ENCODE measurements at regions of chr1 and their contacts with region 1.

Region 1: GRCh38 chr1:206982216-206982615 is 12.0 kb upstream of the FCAMR start:
- DNase-seq: peak; percentile 33
- H3K4me3 ChIP-seq: no peak overlapping the region
- H3K27ac ChIP-seq: no peak overlapping the region
- H3K4me1 ChIP-seq: no peaks in the 10 kb centered on the region
- H3K27me3 ChIP-seq: no peaks in the 10 kb centered on the region
- CTCF ChIP-seq: peak; percentile 82 to 83

Region 2: GRCh38 chr1:206479183-206480125 is 502.8 kb before region 1 on chr1:
- CTCF ChIA-PET with region 1: no interaction called
- dilution Hi-C with region 1: no loop called
- in situ Hi-C with region 1: no loop called
- intact Hi-C with region 1: loop called (anchors 5 kb)
- DNase-seq: peak; percentile 49
- H3K4me3 ChIP-seq: no peak overlapping the region
- H3K27ac ChIP-seq: no peak overlapping the region
- H3K4me1 ChIP-seq: peaks cover 21% of the 10 kb centered on the region
- H3K27me3 ChIP-seq: no peaks in the 10 kb centered on the region
- CTCF ChIP-seq: peak; percentile 75 to 84

Region 3: GRCh38 chr1:206612129-206612876 is 369.9 kb before region 1 on chr1 and contains the start of gene EIF2D:
- CTCF ChIA-PET with region 1: interaction called, 5 read pairs
- dilution Hi-C with region 1: no loop called
- in situ Hi-C with region 1: no loop called
- intact Hi-C with region 1: loop called (anchors 1 kb)
- DNase-seq: peak; percentile 87
- H3K4me3 ChIP-seq: peak within 1 kb of the TSS; percentile 74 to 93 (median 87)
- H3K27ac ChIP-seq: peak within 1 kb of the TSS; percentile 86
- H3K4me1 ChIP-seq: peaks cover 9% of the 10 kb centered on the region
- H3K27me3 ChIP-seq: no peaks in the 10 kb centered on the region
- CTCF ChIP-seq: peak; percentile 74 to 98
- total RNA-seq, gene EIF2D: 43.0 to 44.0 TPM

Region 4: DNA sequence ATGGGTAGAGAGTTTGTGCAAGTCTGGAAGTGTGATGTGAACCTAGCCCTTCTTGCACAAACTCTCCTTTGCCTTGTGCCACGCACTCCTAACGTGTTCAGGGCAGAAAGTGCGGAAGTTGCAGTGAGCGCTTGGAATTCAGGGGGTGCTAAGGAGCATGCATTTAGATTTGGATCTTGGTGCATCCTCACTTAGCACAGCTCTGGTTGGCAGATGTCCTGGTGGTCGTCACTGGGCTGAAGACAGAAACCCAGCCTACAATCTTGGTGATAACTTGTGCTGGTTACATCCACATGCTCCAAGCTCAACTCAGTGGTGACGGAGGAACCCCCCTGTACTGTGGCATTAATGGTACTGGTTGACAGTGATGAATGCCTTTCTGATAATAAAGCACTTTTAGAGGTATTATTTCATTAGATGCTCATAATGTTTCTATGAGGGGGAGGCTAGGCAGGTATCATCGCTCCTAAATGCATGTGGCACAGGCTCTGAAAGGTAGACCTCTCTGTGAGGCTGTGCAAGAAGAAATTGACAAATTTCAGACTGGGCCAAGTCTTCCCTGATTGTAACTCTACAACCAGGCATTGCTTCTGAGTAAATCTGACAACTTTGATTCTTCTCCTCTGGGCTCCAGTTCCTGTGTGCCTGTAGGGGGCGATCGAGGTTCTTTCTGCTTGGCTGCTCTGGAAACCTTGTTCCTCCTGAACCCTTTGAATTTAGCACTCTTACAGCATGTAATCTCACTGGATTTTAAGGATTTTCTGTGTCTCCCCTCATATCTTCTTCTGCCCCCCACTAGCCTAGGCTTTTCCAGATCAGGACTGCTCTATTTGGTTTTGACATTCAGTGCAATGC is 256.9 kb before region 1 on chr1:
- CTCF ChIA-PET with region 1: no interaction called
- dilution Hi-C with region 1: no loop called
- in situ Hi-C with region 1: no loop called
- intact Hi-C with region 1: loop called (anchors 2 kb)
- DNase-seq: no peak
- H3K4me3 ChIP-seq: no peak overlapping the region
- H3K27ac ChIP-seq: no peak overlapping the region
- H3K4me1 ChIP-seq: peaks cover 19% of the 10 kb centered on the region
- H3K27me3 ChIP-seq: no peaks in the 10 kb centered on the region
- CTCF ChIP-seq: peak; percentile 62 to 68

Region 5: GRCh38 chr1:206808615-206809014 is 173.6 kb before region 1 on chr1:
- CTCF ChIA-PET with region 1: interaction called, 16 read pairs
- dilution Hi-C with region 1: no loop called
- in situ Hi-C with region 1: loop called in 1 of 2 experiments (anchors 10 kb)
- intact Hi-C with region 1: loop called (anchors 1 kb)
- DNase-seq: no peak
- H3K4me3 ChIP-seq: no peak overlapping the region
- H3K27ac ChIP-seq: no peak overlapping the region
- H3K4me1 ChIP-seq: peaks cover 7% of the 10 kb centered on the region
- H3K27me3 ChIP-seq: no peaks in the 10 kb centered on the region
- CTCF ChIP-seq: peak; percentile 15 to 52

Region 6: DNA sequence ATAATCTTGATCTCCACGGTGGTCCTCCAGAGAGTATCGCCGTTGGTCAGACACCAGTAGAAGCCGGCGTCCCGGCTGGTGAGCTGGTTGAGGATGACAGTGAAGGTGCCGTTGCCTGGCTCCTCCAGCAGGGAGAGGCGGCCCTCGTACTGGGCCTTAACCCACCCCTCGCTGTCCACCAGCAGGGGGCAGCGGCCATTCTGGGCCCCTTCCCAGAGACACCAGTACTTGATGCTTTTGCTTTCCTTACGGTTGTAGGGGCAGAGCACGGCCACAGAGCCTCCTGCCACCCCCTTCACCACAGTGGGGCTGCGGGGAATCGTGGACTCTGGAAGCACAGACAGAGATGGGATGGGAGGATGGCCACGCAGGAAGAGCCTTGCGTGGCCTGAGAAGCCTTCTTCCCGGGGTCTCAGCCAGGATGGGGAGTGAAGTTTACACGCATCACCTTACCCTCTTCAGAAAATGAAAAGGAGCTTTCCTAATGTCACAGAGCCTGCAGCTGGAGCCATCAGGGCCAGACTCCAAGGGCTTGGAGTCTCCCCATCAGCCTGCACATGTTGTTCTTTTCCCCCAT is 46.6 kb before region 1 on chr1:
- CTCF ChIA-PET with region 1: interaction called, 4 read pairs
- dilution Hi-C with region 1: no loop called
- in situ Hi-C with region 1: no loop called
- intact Hi-C with region 1: loop called (anchors 5 kb)
- DNase-seq: no peak
- H3K4me3 ChIP-seq: no peak overlapping the region
- H3K27ac ChIP-seq: no peak overlapping the region
- H3K4me1 ChIP-seq: peaks cover 22% of the 10 kb centered on the region
- H3K27me3 ChIP-seq: no peaks in the 10 kb centered on the region
- CTCF ChIP-seq: peak; percentile 21 to 26

Region 7: GRCh38 chr1:207052911-207053769 is 70.9 kb after region 1 on chr1 and contains the start of gene PFKFB2:
- CTCF ChIA-PET with region 1: no interaction called
- dilution Hi-C with region 1: no loop called
- in situ Hi-C with region 1: no loop called
- intact Hi-C with region 1: no loop called
- DNase-seq: peak; percentile 99
- H3K4me3 ChIP-seq: peak within 1 kb of the TSS; percentile 77 to 91 (median 80)
- H3K27ac ChIP-seq: peak within 1 kb of the TSS; percentile 95
- H3K4me1 ChIP-seq: peaks cover 34% of the 10 kb centered on the region
- H3K27me3 ChIP-seq: no peaks in the 10 kb centered on the region
- CTCF ChIP-seq: peak in 1 of 2 donors; percentile 29
- total RNA-seq, gene PFKFB2: 34.4 to 38.7 TPM

Region 8: GRCh38 chr1:207077470-207078377 is 95.5 kb after region 1 on chr1:
- CTCF ChIA-PET with region 1: no interaction called
- dilution Hi-C with region 1: no loop called
- in situ Hi-C with region 1: no loop called
- intact Hi-C with region 1: loop called (anchors 1 kb)
- DNase-seq: peak; percentile 75
- H3K4me3 ChIP-seq: no peak overlapping the region
- H3K27ac ChIP-seq: no peak overlapping the region
- H3K4me1 ChIP-seq: peaks cover 44% of the 10 kb centered on the region
- H3K27me3 ChIP-seq: no peaks in the 10 kb centered on the region
- CTCF ChIP-seq: peak; percentile 91 to 94

Measured in mammary epithelial cell (primary cell).